GM12878 (cell line): ENCODE measurements at regions of chr20 and their contacts with region 1.

Region 1: DNA sequence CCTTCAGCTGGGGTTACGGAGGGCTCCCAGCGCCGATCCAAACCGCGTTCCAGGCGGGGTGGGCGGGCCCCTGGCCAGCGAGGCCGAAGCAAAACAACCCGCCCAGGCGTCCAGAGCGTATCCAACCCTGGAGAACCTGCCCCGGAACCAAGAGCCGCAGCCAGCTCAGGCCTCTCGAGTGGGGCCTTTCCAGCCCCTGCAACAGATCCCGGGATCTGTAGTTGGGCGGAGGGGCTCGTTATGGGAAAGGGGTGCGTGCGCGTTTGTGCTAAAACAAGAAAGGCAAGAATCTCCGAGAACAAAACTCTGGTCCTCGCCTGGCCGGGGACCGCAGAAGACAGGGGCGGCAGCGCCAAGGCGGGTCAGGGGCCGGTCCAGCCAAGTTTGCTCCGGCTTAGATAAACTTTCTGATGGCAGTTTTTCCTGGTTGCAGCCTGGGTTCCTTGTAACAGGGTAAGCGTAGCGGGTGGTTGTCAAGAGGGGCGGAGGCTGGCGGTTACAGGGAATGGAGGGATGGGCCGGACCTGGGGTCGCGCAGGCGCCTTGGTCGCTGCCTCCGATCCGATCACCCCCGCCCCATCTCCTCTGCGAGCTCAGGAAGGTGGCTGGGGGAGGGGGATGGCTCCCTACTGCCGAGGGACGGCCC is 448 bp upstream of the RIN2 start:
- DNase-seq: no peak
- ATAC-seq: peak; percentile 51
- H3K4me3 ChIP-seq: no peak overlapping the region
- H3K27ac ChIP-seq: no peak overlapping the region
- H3K4me1 ChIP-seq: no peaks in the 10 kb centered on the region
- H3K27me3 ChIP-seq: peaks cover 12 to 15% of the 10 kb centered on the region in 2 experiments
- CTCF ChIP-seq: no peak
- EP300 ChIP-seq: no peak
- POLR2A ChIP-seq: no peak
- RAD21 ChIP-seq: no peak

Region 2: DNA sequence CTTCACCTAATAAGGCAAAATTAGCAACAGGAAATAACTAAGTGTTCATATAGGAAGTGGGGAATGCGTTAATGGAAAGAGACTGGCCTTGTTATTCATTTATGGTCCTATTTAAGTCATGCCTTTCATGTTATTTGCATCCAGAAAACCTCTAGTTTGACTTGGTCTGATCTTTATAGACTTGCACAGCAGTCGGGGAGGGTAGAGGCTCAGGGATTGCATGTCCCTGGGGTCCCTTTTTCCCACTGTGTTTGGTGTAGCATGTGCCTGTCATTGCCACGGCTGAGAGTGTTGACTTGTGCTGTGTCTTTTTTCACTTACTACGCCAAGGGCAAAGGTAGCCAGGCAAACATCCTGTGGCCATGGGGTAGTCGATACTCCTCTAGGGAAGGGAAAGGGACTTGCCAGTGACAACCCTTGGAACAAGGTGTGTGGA is 105.0 kb before region 1 on chr20:
- CTCF ChIA-PET with region 1: no interaction called
- POLR2A ChIA-PET with region 1: no interaction called
- RAD21 ChIA-PET with region 1: no interaction called
- SMC1A ChIA-PET with region 1: no interaction called
- in situ Hi-C with region 1: no loop called
- intact Hi-C with region 1: no loop called
- DNase-seq: peak; percentile 16
- ATAC-seq: peak; percentile 85
- H3K4me3 ChIP-seq: no peak overlapping the region
- H3K27ac ChIP-seq: no peak overlapping the region
- H3K4me1 ChIP-seq: peaks cover 2% of the 10 kb centered on the region; the same call in 1 of the 2 replicates
- H3K27me3 ChIP-seq: no peaks in the 10 kb centered on the region
- CTCF ChIP-seq: no peak
- EP300 ChIP-seq: no peak
- POLR2A ChIP-seq: no peak
- RAD21 ChIP-seq: no peak

Region 3: DNA sequence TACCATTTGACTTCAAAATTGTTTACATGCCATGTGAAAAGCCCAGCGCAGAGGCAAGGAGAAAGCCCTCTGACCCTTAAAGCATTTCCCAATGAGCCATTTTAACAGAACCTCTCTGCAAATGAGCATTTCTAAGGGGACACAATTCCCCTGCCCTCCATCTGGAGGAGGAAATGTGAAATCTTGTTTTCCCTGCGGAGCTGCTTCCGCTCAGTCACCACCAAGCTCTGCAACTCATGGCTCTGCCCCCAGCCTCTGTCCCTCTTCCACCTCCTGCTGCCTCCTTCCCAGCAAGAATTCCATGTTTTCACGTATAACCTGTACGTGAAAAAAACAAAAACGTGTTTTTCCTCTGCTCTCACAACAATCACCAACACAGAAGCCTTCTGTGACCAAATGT is 12.8 kb after region 1 on chr20:
- CTCF ChIA-PET with region 1: interaction called, 7 read pairs
- POLR2A ChIA-PET with region 1: no interaction called
- RAD21 ChIA-PET with region 1: interaction called, 4 read pairs
- SMC1A ChIA-PET with region 1: interaction called, 10 read pairs
- in situ Hi-C with region 1: no loop called
- intact Hi-C with region 1: no loop called
- DNase-seq: no peak
- ATAC-seq: no peak
- H3K4me3 ChIP-seq: no peak overlapping the region
- H3K27ac ChIP-seq: no peak overlapping the region
- H3K4me1 ChIP-seq: no peaks in the 10 kb centered on the region
- H3K27me3 ChIP-seq: peaks cover 3 to 7% of the 10 kb centered on the region in 2 experiments
- CTCF ChIP-seq: no peak
- EP300 ChIP-seq: no peak
- POLR2A ChIP-seq: no peak
- RAD21 ChIP-seq: no peak

Region 4: GRCh38 chr20:19974626-19975435 is 217.2 kb after region 1 on chr20:
- CTCF ChIA-PET with region 1: no interaction called
- POLR2A ChIA-PET with region 1: no interaction called
- RAD21 ChIA-PET with region 1: no interaction called
- SMC1A ChIA-PET with region 1: no interaction called
- in situ Hi-C with region 1: no loop called
- intact Hi-C with region 1: no loop called
- DNase-seq: no peak
- ATAC-seq: no peak
- H3K4me3 ChIP-seq: no peak overlapping the region
- H3K27ac ChIP-seq: no peak overlapping the region
- H3K4me1 ChIP-seq: no peaks in the 10 kb centered on the region
- H3K27me3 ChIP-seq: no peaks in the 10 kb centered on the region; a peak in 1 of 4 replicates
- CTCF ChIP-seq: no peak
- EP300 ChIP-seq: no peak
- POLR2A ChIP-seq: no peak
- RAD21 ChIP-seq: no peak